Activated naive CD4-positive, alpha-beta T cell treated with anti-CD3 and anti-CD28 coated beads, Interleukin-2, amount 10 ng/mL, durations not matched to agents 7 days and 5 days (primary cell): ENCODE measurements at regions of chr1 and their contacts with region 1.

Region 1: GRCh38 chr1:198937231-198938031 is 298.6 kb downstream of the PTPRC start:
- DNase-seq: peak; percentile 69
- H3K4me3 Mint-ChIP-seq: no peak overlapping the region
- H3K27ac Mint-ChIP-seq: peak overlapping the region; percentile 94
- H3K4me1 Mint-ChIP-seq: peaks cover 23% of the 10 kb centered on the region
- H3K27me3 Mint-ChIP-seq: no peaks in the 10 kb centered on the region

Region 2: DNA sequence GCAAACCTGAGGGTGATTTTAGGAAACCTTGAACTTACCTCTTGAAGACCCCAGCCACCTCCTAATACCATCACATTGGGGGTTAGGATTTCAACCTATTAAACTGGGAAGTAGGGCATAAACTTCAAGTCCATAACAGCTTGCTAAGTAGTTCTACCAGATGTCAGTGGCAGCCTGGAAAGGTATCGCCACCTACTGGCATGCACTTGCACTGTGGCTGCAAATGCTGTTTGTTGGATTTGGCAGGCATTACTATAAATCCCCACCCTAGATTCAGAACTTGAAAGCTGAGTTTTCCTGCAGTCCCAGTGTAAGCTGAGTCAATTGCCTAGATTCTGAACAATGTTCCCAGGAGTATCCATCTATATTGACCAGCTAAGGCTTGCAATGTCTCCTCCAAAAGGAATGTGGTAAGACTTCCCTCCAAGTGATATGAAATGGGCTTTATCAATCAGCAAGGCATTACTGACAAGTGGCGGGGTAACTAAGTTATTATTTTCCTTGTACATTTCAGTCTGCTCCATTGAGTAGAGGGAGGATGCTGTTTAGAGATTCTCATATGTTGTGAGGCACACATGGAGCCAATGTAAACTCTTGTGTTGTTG is 175.9 kb after region 1 on chr1:
- CTCF ChIA-PET with region 1: interaction called, 19 read pairs
- DNase-seq: peak; percentile 80
- H3K4me3 Mint-ChIP-seq: no peak overlapping the region
- H3K27ac Mint-ChIP-seq: peak overlapping the region; percentile 26
- H3K4me1 Mint-ChIP-seq: peaks cover 10% of the 10 kb centered on the region
- H3K27me3 Mint-ChIP-seq: peaks cover 3% of the 10 kb centered on the region